ENCODE measurements at regions of chr12 and their contacts with region 1.

Region 1: GRCh38 chr12:89542912-89543592 is 17.2 kb upstream of the POC1B start:
- DNase-seq: peak in 4 of 5 donors; percentile 39 to 63 (median 53)
- ATAC-seq: peak; percentile 47 to 79 (median 73)
- H3K4me3 ChIP-seq: no peak overlapping the region
- H3K27ac ChIP-seq: no peak overlapping the region
- H3K4me1 ChIP-seq: peaks cover 0 to 32% (median 19%) of the 10 kb centered on the region in 12 donors
- H3K27me3 ChIP-seq: no peaks in the 10 kb centered on the region
- CTCF ChIP-seq: peak; percentile 79 to 93 (median 88)
- POLR2A ChIP-seq: no peak

Region 2: DNA sequence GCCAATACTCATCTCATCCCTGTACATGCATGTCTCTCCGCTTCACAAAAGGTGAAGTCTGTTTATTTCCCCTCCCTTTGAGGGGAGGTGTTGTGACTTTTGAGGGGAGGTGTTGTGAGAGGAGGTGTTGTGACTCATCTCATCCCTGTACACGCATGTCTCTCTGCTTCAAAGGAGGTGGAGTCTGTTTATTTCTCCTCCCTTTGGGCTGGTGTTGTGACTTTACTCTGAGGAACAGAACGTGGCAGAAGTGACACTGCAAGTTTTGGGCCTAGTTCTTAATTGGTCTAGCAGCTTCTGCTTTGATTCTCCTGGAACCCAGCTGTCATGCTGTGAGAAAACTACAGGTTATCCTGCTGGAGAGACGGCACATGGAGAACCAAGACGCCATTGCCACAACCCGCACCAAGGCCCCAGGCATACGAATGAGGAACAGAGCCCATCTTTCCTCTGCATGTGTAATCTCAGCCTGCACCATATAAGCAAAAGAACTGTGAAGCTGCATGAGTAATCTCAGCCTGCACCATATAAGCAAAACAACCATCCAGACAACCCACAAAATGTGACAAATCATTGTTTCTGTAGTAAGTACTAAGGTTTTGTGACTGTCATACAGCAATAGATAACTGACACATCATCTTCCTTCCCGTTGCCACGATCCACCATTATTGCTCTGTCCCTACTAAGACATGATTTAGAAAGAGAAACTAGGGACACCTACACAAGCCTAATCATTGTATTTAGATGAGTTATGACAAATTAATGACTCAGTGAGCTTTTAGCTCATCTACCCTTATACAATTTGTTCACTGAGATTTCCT is 48.4 kb before region 1 on chr12:
- intact Hi-C with region 1: no loop called
- DNase-seq: no peak
- ATAC-seq: no peak
- H3K4me3 ChIP-seq: no peak overlapping the region
- H3K27ac ChIP-seq: no peak overlapping the region
- H3K4me1 ChIP-seq: peaks cover 0 to 5% (median 0%) of the 10 kb centered on the region in 12 donors
- H3K27me3 ChIP-seq: no peaks in the 10 kb centered on the region
- CTCF ChIP-seq: no peak
- POLR2A ChIP-seq: no peak

Region 3: DNA sequence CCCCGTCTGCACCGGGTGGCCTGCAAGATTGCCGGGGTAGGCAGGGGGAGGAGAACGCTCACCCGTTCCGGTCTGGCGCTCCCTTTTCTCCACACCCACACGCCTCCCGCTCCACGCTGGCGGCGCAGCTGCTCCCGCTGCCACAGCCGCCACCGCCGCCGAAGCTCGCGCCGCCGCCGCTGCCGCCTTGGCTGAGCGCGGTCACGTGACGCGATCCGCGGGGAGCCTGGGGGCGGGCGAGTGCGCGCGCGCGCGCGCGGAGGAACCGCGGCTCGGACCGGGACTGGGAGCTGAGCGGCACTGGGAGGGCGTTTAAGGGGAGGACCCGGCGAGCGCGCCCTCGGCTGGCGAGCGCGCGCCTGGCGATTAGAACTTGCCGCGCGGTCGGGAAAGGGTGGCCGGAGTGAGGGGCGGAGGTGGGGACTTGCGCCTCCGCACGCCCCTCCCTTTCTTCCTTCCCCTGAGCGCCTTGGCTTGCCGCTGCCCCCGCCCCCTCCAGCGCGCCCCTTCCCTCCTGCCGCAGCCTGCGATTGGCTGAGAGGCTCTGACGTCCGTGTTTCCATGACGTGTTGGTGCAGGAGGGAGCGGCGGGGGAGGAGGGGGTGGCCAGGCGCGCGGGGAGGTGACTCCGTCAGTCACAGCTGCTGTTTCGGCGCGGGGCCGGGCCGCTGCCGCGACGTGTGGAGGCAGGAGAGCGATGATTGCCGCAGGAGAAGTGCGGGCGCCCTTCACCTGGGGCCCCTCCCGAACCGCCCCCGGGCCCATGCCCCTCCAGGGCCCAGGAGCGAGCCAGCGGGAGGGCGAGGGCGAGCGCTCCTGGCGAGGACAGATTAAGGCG is 166.3 kb after region 1 on chr12:
- intact Hi-C with region 1: loop called in 6 of 10 experiments (anchors 10 kb)
- DNase-seq: peak; percentile 99 to 100 (median 99)
- ATAC-seq: peak; percentile 93 to 97 (median 96)
- H3K4me3 ChIP-seq: peak overlapping the region; percentile 81 to 95 (median 92)
- H3K27ac ChIP-seq: peak overlapping the region; percentile 96 to 99 (median 98)
- H3K4me1 ChIP-seq: peaks cover 0 to 31% (median 9%) of the 10 kb centered on the region in 12 donors
- H3K27me3 ChIP-seq: no peaks in the 10 kb centered on the region
- CTCF ChIP-seq: peak in 3 of 12 donors; percentile 11 to 26 (median 14)
- POLR2A ChIP-seq: peak; percentile 81 to 94

Region 4: GRCh38 chr12:89907659-89908058 is 364.6 kb after region 1 on chr12:
- intact Hi-C with region 1: no loop called
- DNase-seq: no peak
- ATAC-seq: no peak
- H3K4me3 ChIP-seq: no peak overlapping the region
- H3K27ac ChIP-seq: no peak overlapping the region
- H3K4me1 ChIP-seq: no peaks in the 10 kb centered on the region
- H3K27me3 ChIP-seq: no peaks in the 10 kb centered on the region
- CTCF ChIP-seq: no peak
- POLR2A ChIP-seq: no peak

Region 5: GRCh38 chr12:89943463-89943862 is 400.4 kb after region 1 on chr12:
- intact Hi-C with region 1: no loop called
- DNase-seq: no peak
- ATAC-seq: no peak
- H3K4me3 ChIP-seq: no peak overlapping the region
- H3K27ac ChIP-seq: peak overlapping the region in 1 of 12 donors; percentile 6
- H3K4me1 ChIP-seq: peaks cover 0 to 11% (median 0%) of the 10 kb centered on the region in 12 donors
- H3K27me3 ChIP-seq: no peaks in the 10 kb centered on the region
- CTCF ChIP-seq: no peak
- POLR2A ChIP-seq: no peak

Region 6: GRCh38 chr12:90253674-90254181 is 710.7 kb after region 1 on chr12:
- intact Hi-C with region 1: loop called in 1 of 10 experiments (anchors 5 kb)
- DNase-seq: peak; percentile 35 to 74 (median 59)
- ATAC-seq: peak; percentile 82 to 94 (median 90)
- H3K4me3 ChIP-seq: no peak overlapping the region
- H3K27ac ChIP-seq: peak overlapping the region in 2 of 12 donors; percentile 19 to 28
- H3K4me1 ChIP-seq: peaks cover 0 to 29% (median 9%) of the 10 kb centered on the region in 12 donors
- H3K27me3 ChIP-seq: no peaks in the 10 kb centered on the region
- CTCF ChIP-seq: peak in 4 of 12 donors; percentile 6 to 15 (median 12)
- POLR2A ChIP-seq: no peak

Region 7: DNA sequence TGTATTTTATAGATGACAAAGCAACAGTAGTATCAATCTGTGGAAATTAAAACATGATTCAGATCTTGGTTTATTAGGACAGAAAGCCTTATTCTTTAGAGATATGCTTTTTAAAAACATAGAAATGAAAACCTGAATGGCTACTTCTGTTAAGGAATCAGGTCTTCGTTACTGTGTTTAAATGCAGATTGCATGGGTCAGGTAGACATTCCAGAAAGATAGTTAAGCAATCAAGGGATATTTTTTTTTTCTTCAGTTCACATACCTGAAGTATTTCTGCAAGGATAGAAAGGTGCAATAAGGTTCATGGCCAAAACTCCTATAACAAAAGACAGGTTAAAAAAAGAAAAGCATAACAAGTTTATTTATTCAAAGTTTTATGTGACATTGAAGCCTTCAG is 834.2 kb after region 1 on chr12:
- intact Hi-C with region 1: no loop called
- DNase-seq: no peak
- ATAC-seq: no peak
- H3K4me3 ChIP-seq: no peak overlapping the region
- H3K27ac ChIP-seq: no peak overlapping the region
- H3K4me1 ChIP-seq: no peaks in the 10 kb centered on the region
- H3K27me3 ChIP-seq: no peaks in the 10 kb centered on the region
- CTCF ChIP-seq: no peak
- POLR2A ChIP-seq: no peak

Region 8: GRCh38 chr12:90909069-90909770 is 1366.2 kb after region 1 on chr12:
- intact Hi-C with region 1: loop called in 2 of 10 experiments (anchors 5 to 10 kb)
- DNase-seq: no peak
- ATAC-seq: peak in 1 of 4 donors; percentile 56
- H3K4me3 ChIP-seq: no peak overlapping the region
- H3K27ac ChIP-seq: no peak overlapping the region
- H3K4me1 ChIP-seq: no peaks in the 10 kb centered on the region
- H3K27me3 ChIP-seq: no peaks in the 10 kb centered on the region
- CTCF ChIP-seq: peak; percentile 50 to 83 (median 66)
- POLR2A ChIP-seq: no peak

Region 9: GRCh38 chr12:90959538-90960139 is 1416.6 kb after region 1 on chr12:
- intact Hi-C with region 1: loop called in 3 of 10 experiments (anchors 5 to 10 kb)
- DNase-seq: no peak
- ATAC-seq: peak in 3 of 4 donors; percentile 55 to 70 (median 55)
- H3K4me3 ChIP-seq: peak overlapping the region in 2 of 12 donors; percentile 22 to 37
- H3K27ac ChIP-seq: no peak overlapping the region
- H3K4me1 ChIP-seq: peaks cover 0 to 5% (median 0%) of the 10 kb centered on the region in 12 donors
- H3K27me3 ChIP-seq: no peaks in the 10 kb centered on the region
- CTCF ChIP-seq: peak; percentile 59 to 83 (median 69)
- POLR2A ChIP-seq: no peak

Measured in heart left ventricle (tissue), 16 donors.